Dorsolateral prefrontal cortex (tissue), 120 donors: ENCODE measurements at regions of chr5 and their contacts with region 1.

Region 1: DNA sequence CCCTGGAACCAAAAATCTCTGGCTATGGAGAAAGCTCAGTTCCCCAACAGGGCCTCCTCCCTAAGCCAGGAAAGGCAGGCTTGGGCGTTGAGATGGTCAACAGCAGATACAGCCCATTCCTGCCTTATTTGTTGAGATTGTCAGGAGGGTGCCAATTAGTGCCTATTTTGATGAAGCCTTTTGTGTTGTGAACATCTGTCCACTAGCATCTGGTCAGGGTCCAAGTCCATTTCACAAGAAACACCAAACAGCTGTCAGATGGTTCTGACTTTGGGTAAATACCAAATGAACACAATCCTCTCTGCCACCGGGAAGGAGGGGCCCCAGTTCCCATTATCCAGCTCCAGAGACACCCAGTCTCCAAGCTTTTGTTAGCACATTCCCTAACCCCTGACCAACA is 19.9 kb downstream of the SEMA6A start:
- DNase-seq: peak in 3 of 10 donors; percentile 36 to 64 (median 51)
- H3K4me3 ChIP-seq: peak overlapping the region in 4 of 59 donors; percentile 19 to 40 (median 29)
- H3K27ac ChIP-seq: peak overlapping the region; percentile 31 to 98 (median 90)
- H3K27me3 ChIP-seq: no peaks in the 10 kb centered on the region
- CTCF ChIP-seq: no peak

Region 2: DNA sequence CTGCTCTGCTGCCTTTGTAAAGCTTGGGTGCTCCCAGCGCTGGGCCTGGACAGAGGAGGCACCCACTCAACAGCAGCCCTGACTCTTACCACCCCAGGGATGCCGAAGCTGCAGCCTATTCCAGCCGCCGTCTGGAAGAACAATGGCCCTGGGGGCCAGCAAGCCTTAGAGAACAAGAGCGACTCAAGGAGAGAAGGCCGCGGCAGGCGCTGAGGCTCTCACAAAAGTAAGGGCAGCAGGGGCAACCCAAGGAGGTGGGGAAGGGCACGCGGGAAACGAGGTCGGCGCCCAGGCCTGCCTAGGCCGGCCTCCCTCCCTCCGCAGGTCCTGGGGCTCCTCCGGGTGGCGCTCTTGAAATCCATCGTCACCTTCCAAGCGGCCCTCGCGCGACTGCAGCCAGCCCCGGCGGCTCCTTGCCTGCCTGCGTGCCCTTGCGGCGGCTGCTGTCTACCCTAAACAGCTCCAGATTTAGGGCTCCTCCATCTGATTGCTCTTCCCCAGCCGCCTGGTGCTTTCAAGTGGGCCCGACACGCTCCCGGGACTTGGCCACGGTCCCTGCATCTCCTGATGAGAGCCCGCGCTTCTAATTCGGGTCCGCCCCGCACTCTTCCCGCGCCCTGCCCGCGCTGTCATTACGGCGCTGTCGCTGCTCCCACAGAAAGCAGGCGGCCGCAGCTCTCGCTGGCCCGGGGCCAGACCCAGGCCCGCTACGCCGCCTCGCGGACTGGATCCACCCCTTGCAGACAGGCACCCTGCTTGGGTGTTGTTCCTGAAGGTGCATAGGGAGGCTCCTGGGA is 193.4 kb before region 1 on chr5:
- intact Hi-C with region 1: loop called in 1 of 2 experiments (anchors 5 kb)
- DNase-seq: peak; percentile 68 to 84 (median 75)
- H3K4me3 ChIP-seq: peak overlapping the region; percentile 27 to 72 (median 57)
- H3K27ac ChIP-seq: peak overlapping the region in 58 of 59 donors; percentile 5 to 90 (median 79)
- H3K27me3 ChIP-seq: no peaks in the 10 kb centered on the region
- CTCF ChIP-seq: peak in 54 of 56 donors; percentile 22 to 82 (median 51)

Region 3: DNA sequence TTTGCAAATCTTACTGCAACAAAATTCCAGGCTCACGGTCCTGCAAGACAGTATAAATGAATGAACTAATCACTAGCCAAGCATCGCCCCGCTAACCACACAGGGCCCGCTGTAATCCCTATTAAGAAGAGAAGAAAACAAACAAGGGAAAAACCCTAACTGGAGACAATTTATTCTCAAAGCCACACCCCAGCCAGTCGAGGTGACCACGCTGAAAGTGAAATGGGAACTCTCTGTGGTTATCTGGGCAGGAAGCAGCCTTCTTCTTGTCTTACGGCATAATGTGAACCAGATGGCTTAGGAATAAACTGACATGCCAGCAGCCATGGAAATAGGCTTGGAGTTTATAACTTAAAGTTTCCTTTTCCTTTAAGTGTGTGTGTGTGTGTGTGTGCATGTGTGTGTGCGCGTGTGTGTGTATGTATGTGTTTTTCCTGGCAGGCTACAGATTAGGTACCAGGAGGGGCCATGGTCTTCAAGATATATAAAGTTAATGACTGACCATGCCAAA is 100.3 kb before region 1 on chr5:
- intact Hi-C with region 1: loop called in 1 of 2 experiments (anchors 5 kb)
- DNase-seq: peak in 1 of 10 donors; percentile 37
- H3K4me3 ChIP-seq: peak overlapping the region in 40 of 59 donors; percentile 3 to 49 (median 30)
- H3K27ac ChIP-seq: peak overlapping the region in 58 of 59 donors; percentile 18 to 92 (median 80)
- H3K27me3 ChIP-seq: no peaks in the 10 kb centered on the region
- CTCF ChIP-seq: peak in 2 of 56 donors; percentile 15 to 16

Region 4: DNA sequence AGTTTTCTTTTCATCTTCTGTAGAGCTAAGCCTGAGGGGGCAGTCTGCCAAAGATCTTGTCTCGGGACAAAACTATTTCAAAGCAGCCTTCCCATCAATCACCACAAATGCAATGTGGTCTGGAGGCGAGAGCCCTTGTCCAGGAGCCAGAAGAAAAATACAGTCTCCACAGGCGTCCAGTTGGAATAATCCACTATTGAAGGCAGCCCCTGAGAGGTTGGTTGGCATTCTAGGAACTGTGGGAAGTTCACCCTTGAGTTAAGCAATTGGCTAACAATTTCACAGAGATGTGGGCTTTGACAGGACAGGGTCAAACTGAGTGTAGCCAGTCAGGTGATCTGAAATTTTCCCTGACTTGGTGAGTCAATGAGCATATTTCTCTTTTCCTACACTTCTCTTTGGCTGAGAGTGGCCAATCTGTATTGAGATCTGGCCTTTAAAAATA is 52.1 kb before region 1 on chr5:
- intact Hi-C with region 1: no loop called
- DNase-seq: no peak
- H3K4me3 ChIP-seq: no peak overlapping the region
- H3K27ac ChIP-seq: peak overlapping the region in 24 of 59 donors; percentile 2 to 65 (median 25)
- H3K27me3 ChIP-seq: no peaks in the 10 kb centered on the region
- CTCF ChIP-seq: no peak

Region 5: DNA sequence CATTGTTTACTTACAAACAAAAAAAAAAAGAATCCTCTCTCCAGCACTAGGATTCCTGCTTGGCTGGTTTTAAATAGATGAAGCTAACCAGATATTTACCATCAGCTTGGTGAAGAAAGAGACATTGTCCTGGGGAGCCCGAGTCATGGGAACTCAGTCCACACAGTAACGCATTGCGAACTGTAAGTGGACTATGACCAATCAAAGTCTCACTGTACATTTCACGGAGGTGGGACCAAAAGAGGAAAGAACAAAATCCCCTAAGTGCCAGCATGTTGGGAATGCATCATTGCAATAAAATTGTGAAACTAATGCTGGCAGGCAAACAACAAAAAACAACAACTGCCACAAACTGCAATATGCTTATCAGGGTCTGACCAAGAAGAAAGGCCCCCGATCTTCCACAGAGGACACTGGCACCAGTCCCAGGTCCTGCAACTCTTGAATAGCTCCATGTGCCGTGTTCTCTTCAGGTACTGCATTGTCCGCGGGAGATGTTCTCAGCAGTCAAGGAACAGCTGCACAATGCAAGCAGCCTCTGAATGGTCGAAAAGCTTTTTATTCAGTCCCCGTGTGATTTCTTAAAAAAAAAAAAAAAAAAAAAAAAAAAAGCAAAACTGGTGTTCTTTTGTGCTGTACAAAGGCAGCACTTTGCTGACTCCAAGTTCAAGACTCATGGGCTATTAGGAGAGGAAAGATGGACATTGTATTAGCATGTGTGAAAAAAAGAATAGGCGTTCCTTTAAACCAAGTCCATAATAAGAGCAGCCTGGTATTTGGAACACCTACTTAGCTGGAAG is 18.3 kb before region 1 on chr5:
- intact Hi-C with region 1: loop called in 1 of 2 experiments (anchors 2 kb)
- DNase-seq: peak in 3 of 10 donors; percentile 36 to 61 (median 50)
- H3K4me3 ChIP-seq: peak overlapping the region in 53 of 59 donors; percentile 11 to 64 (median 36)
- H3K27ac ChIP-seq: peak overlapping the region in 57 of 59 donors; percentile 13 to 92 (median 84)
- H3K27me3 ChIP-seq: no peaks in the 10 kb centered on the region
- CTCF ChIP-seq: peak in 3 of 56 donors; percentile 6 to 8 (median 7)

Region 6: GRCh38 chr5:116685069-116685468 is 130.3 kb after region 1 on chr5:
- intact Hi-C with region 1: no loop called
- DNase-seq: no peak
- H3K4me3 ChIP-seq: no peak overlapping the region
- H3K27ac ChIP-seq: no peak overlapping the region
- H3K27me3 ChIP-seq: peaks cover 0 to 4% (median 0%) of the 10 kb centered on the region in 45 donors
- CTCF ChIP-seq: no peak